Posterior vena cava (tissue), 2 donors: ENCODE measurements at regions of chr18 and their contacts with region 1.

Region 1: GRCh38 chr18:31162419-31162793 is 250 bp downstream of the DSC1 start:
- DNase-seq: no peak

Region 2: DNA sequence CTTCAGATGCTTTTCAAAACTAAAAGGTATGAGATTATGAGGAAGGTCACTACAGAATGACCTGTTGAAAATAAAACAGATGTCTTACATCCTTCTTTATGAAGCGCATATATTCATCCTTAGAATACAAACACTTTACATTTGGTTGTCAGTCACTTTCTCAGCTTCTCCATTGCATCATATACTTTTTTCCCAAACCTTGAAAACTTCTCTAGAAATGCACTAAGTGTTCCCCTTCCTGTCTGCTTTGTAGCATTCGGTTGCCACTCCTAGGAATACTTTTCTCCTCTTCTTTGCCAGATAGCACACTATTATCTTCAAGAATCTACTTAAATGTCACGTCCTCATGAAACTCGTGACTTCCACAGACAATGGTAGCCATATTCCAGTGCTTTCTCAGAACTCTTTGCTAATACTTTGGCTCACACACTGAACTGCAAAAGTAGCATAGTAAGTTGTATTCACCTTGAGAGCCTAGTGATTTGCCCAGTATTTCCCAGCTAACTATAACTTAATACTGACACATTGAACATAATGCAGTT is 27.3 kb before region 1 on chr18:
- intact Hi-C with region 1: loop called in 1 of 2 experiments (anchors 2 kb)
- DNase-seq: no peak